A673 (cell line): ENCODE measurements at regions of chr1 and their contacts with region 1.

Region 1: DNA sequence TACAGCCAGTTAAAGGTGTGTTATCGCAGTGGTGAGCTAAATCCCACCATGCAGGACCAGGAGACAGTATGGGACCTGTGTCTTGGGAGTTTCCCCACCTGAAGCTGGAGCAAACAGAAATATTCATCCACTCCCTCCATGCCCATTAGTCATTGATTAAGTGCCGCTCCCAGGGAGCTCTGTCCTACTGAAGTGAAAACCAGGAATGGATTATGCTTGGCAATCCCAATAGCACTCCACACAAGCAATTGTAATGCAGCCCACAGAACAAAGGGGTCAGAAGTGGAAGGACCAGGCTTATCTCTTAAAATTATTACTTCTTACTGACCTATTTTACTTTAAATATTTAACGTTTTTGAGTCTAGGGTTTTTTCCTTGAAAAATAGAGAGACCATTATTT is 1005.4 kb downstream of the ADGRL2 start:
- DNase-seq: no peak
- H3K4me3 ChIP-seq: no peak overlapping the region
- H3K27ac ChIP-seq: no peak overlapping the region
- H3K4me1 ChIP-seq: no peaks in the 10 kb centered on the region
- H3K27me3 ChIP-seq: peaks cover 22% of the 10 kb centered on the region
- CTCF ChIP-seq: no peak

Region 2: GRCh38 chr1:82858031-82858430 is 51.9 kb after region 1 on chr1:
- CTCF ChIA-PET with region 1: no interaction called
- POLR2A ChIA-PET with region 1: no interaction called
- intact Hi-C with region 1: loop called (anchors 5 kb)
- DNase-seq: no peak
- H3K4me3 ChIP-seq: no peak overlapping the region
- H3K27ac ChIP-seq: no peak overlapping the region
- H3K4me1 ChIP-seq: no peaks in the 10 kb centered on the region
- H3K27me3 ChIP-seq: no peaks in the 10 kb centered on the region
- CTCF ChIP-seq: no peak

Region 3: DNA sequence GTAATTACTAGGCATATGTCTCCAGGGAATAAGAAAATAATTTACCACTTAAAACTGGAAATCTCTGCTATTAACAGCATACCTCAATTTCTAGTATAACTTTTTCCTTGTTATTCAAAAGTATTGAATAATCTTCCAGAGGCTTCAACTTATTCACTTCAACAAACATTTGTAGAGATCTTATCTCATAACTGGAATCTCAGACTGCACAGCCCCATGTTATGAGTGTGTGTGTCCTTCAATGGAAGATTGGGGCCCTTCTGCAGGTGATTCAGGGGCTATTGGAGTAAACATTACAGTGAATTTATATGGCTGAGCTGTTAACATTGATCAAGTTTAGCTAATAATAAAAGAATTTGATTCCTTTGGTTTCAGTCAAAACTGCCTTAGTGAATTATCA is 246.7 kb after region 1 on chr1:
- CTCF ChIA-PET with region 1: no interaction called
- POLR2A ChIA-PET with region 1: no interaction called
- intact Hi-C with region 1: no loop called
- DNase-seq: no peak
- H3K4me3 ChIP-seq: no peak overlapping the region
- H3K27ac ChIP-seq: no peak overlapping the region
- H3K4me1 ChIP-seq: no peaks in the 10 kb centered on the region
- H3K27me3 ChIP-seq: no peaks in the 10 kb centered on the region
- CTCF ChIP-seq: no peak